ENCODE measurements at regions of chr1 and their contacts with region 1.

Region 1: DNA sequence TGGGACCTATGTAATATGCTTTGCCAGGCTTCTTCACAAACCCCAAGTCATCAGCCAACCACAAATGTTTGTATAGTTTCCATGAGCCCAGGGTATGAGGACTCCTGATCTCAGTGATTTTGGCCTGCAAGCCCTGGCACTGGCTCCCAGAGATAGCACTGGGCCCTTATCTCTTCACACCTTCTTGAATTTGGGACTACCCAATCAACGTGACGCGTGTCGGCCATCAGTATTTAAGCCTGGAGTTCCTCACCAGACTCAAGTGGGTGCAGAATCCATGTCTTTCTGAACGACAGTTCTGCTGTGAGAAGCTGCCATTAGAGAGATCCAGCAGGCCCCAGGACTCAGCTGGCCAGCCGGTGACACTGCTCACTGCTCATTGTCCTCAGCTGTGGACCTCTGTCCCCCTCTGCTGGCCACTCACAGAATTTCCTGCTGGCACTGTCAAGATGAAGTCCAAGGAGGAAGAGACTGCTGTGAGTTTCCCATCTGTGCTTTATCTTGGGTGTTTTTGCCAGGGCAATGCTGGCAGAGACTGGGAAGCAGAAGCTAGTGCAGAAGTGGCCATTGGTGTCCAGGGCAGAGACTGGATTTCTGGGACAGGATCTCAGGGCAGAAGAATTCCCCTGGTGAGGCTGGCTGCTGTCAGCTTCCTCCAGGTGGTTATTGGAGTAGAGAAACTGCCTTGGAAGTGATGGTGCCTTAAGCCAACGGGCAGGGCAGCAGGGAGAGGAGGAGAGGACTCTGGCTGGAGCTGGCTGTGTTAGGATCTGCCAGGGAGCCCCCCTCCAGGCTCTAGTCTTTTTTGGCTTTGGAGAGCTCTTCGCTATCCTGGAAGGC is 28.4 kb downstream of the TMCC2 start:
- DNase-seq: peak; percentile 80
- ATAC-seq: peak; percentile 98
- H3K4me3 ChIP-seq: no peak overlapping the region
- H3K27ac ChIP-seq: no peak overlapping the region
- H3K4me1 ChIP-seq: peaks cover 10% of the 10 kb centered on the region
- H3K27me3 ChIP-seq: no peaks in the 10 kb centered on the region
- CTCF ChIP-seq: peak; percentile 98
- POLR2A ChIP-seq: no peak
- RAD21 ChIP-seq: peak; percentile 99

Region 2: GRCh38 chr1:204975570-204976235 is 280.5 kb before region 1 on chr1:
- CTCF ChIA-PET with region 1: interaction called, 8 read pairs
- POLR2A ChIA-PET with region 1: no interaction called
- dilution Hi-C with region 1: no loop called
- in situ Hi-C with region 1: loop called (anchors 5 kb)
- intact Hi-C with region 1: loop called (anchors 1 kb)
- DNase-seq: peak; percentile 32
- ATAC-seq: peak; percentile 96
- H3K4me3 ChIP-seq: no peak overlapping the region
- H3K27ac ChIP-seq: no peak overlapping the region
- H3K4me1 ChIP-seq: no peaks in the 10 kb centered on the region
- H3K27me3 ChIP-seq: peaks cover 22% of the 10 kb centered on the region
- CTCF ChIP-seq: peak; percentile 72
- POLR2A ChIP-seq: no peak
- RAD21 ChIP-seq: peak; percentile 69

Region 3: DNA sequence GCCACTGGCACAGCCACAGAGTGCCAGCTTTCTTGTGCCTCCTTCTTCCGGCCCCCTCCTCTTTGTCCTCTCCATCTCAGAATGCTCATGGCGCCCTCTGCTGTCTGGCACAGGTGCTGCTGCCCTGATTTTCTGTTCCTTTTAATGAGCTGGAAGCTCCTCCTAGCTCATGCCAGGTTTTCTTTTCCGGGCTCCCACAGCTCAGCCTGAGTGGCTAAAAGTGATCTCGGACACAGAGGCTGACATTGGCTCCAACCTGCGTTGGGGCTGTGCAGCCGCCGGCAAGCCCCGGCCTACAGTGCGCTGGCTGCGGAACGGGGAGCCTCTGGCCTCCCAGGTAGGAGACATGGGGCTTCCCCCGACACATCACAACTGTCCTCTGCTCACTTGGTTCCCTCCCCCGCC is 194.5 kb before region 1 on chr1:
- CTCF ChIA-PET with region 1: interaction called, 9 read pairs
- POLR2A ChIA-PET with region 1: no interaction called
- dilution Hi-C with region 1: no loop called
- in situ Hi-C with region 1: no loop called
- intact Hi-C with region 1: loop called (anchors 1 kb)
- DNase-seq: peak; percentile 52
- ATAC-seq: peak; percentile 93
- H3K4me3 ChIP-seq: no peak overlapping the region
- H3K27ac ChIP-seq: no peak overlapping the region
- H3K4me1 ChIP-seq: no peaks in the 10 kb centered on the region
- H3K27me3 ChIP-seq: peaks cover 15% of the 10 kb centered on the region
- CTCF ChIP-seq: peak; percentile 82
- POLR2A ChIP-seq: no peak
- RAD21 ChIP-seq: peak; percentile 72

Region 4: DNA sequence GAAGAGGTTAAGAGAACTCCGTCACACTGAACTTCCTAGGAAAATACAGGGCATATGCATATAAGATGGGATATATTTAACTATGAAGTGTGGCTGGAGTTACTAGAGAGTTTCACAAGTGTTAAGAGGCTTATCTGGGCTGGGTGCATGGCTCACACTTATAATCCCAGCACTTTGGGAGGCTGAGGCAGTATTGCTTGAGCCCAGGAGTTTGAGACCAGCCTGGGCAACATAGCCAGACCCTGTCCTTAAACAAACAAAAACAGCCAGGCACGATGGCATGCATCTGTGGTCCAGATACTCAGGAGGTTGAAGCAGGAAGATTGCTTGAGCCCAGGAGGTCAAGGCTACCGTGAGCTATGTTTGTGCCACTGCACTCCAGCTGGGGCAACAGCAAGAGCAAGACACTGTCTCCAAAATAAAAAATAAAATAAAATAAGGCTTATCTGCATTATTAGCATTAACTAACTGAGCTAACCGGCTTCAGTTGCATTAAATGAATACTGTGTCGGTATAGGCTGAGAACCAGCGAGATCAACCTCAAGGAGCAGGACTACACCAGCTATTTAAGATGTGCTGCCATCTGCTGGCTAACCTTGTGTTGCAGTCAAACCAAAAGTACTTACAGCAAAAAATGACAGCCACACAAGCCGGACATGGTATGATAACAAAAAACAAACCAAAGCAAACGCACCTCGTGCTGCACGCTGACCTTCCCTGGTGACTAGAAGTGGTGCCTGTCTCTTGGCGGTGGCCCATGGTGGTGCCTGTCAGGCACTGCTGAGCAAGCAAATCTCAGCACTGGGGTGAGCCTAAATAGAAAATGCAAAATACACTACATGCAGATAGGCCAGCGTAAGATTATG is 114.7 kb before region 1 on chr1:
- CTCF ChIA-PET with region 1: interaction called, 3 read pairs
- POLR2A ChIA-PET with region 1: no interaction called
- dilution Hi-C with region 1: no loop called
- in situ Hi-C with region 1: no loop called
- intact Hi-C with region 1: loop called (anchors 1 kb)
- DNase-seq: peak; percentile 86
- ATAC-seq: peak; percentile 79
- H3K4me3 ChIP-seq: no peak overlapping the region
- H3K27ac ChIP-seq: no peak overlapping the region
- H3K4me1 ChIP-seq: peaks cover 16% of the 10 kb centered on the region
- H3K27me3 ChIP-seq: no peaks in the 10 kb centered on the region
- CTCF ChIP-seq: peak; percentile 73
- POLR2A ChIP-seq: no peak
- RAD21 ChIP-seq: peak; percentile 71

Region 5: GRCh38 chr1:205273551-205273982 is 17.4 kb after region 1 on chr1:
- CTCF ChIA-PET with region 1: interaction called, 15 read pairs
- POLR2A ChIA-PET with region 1: no interaction called
- dilution Hi-C with region 1: no loop called
- in situ Hi-C with region 1: no loop called
- intact Hi-C with region 1: no loop called
- DNase-seq: peak; percentile 76
- ATAC-seq: peak; percentile 88
- H3K4me3 ChIP-seq: no peak overlapping the region
- H3K27ac ChIP-seq: no peak overlapping the region; the same call in 1 of the 2 replicates
- H3K4me1 ChIP-seq: peaks cover 15% of the 10 kb centered on the region
- H3K27me3 ChIP-seq: no peaks in the 10 kb centered on the region
- CTCF ChIP-seq: peak; percentile 97
- POLR2A ChIP-seq: peak; percentile 43; the same call in 1 of the 2 replicates
- RAD21 ChIP-seq: peak; percentile 97

Measured in IMR-90 (cell line).